K562 (cell line): ENCODE measurements at regions of chr7 and their contacts with region 1.

Region 1: GRCh38 chr7:157432957-157433576 is 96.3 kb downstream of the DNAJB6 start:
- DNase-seq: peak; percentile 57 to 69 (median 66)
- ATAC-seq: peak; percentile 69
- H3K4me3 ChIP-seq: no peak overlapping the region
- H3K27ac ChIP-seq: no peak overlapping the region
- H3K4me1 ChIP-seq: peaks cover 11 to 26% of the 10 kb centered on the region in 2 experiments
- H3K27me3 ChIP-seq: peaks cover 20 to 68% of the 10 kb centered on the region in 2 experiments
- CTCF ChIP-seq: peak; percentile 75 to 82 (median 80)
- EP300 ChIP-seq: no peak
- POLR2A ChIP-seq: no peak
- RAD21 ChIP-seq: peak; percentile 40 to 72; a peak in 3 of 4 replicates

Region 2: DNA sequence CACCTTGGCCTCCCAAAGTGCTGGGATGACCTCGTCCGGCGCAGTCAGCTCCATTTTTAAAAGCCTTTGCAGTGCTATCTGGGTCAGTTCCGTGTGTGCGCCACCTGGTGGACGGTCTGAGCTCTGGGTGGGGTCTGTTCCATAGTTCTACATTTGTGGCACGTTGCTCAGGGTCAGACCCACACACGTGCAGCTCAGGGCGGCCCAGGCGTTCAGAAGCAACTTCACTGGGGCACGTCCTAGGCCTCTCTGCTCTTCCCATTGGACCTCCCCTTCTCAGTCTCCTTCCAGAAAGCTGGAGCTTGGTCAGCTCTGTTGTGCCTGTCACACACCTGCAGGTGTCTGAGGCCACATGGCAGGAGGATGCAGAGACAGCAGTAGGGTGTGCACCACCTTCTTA is 41.6 kb after region 1 on chr7:
- CTCF ChIA-PET with region 1: no interaction called
- POLR2A ChIA-PET with region 1: interaction called, 3 read pairs
- in situ Hi-C with region 1: no loop called
- intact Hi-C with region 1: loop called (anchors 5 kb)
- DNase-seq: peak; percentile 79 to 85 (median 82)
- ATAC-seq: peak; percentile 95
- H3K4me3 ChIP-seq: no peak overlapping the region
- H3K27ac ChIP-seq: no peak overlapping the region
- H3K4me1 ChIP-seq: peaks cover 0 to 17% of the 10 kb centered on the region in 2 experiments; a peak in 2 of 5 replicates
- H3K27me3 ChIP-seq: peaks cover 25 to 46% of the 10 kb centered on the region in 2 experiments
- CTCF ChIP-seq: peak; percentile 69 to 84 (median 79)
- EP300 ChIP-seq: no peak
- POLR2A ChIP-seq: no peak
- RAD21 ChIP-seq: peak; percentile 17 to 62; a peak in 2 of 4 replicates

Region 3: GRCh38 chr7:157568770-157569584 is 135.9 kb after region 1 on chr7:
- CTCF ChIA-PET with region 1: no interaction called
- POLR2A ChIA-PET with region 1: no interaction called
- in situ Hi-C with region 1: no loop called
- intact Hi-C with region 1: no loop called
- DNase-seq: no peak
- ATAC-seq: peak; percentile 39
- H3K4me3 ChIP-seq: no peak overlapping the region
- H3K27ac ChIP-seq: no peak overlapping the region
- H3K4me1 ChIP-seq: no peaks in the 10 kb centered on the region
- H3K27me3 ChIP-seq: peaks cover 63 to 84% of the 10 kb centered on the region in 2 experiments
- CTCF ChIP-seq: no peak
- EP300 ChIP-seq: no peak
- POLR2A ChIP-seq: no peak
- RAD21 ChIP-seq: no peak

Region 4: GRCh38 chr7:157875230-157876179 is 442.4 kb after region 1 on chr7:
- CTCF ChIA-PET with region 1: no interaction called
- POLR2A ChIA-PET with region 1: no interaction called
- in situ Hi-C with region 1: no loop called
- intact Hi-C with region 1: loop called (anchors 2 kb)
- DNase-seq: peak; percentile 50 to 69 (median 67)
- ATAC-seq: peak; percentile 93
- H3K4me3 ChIP-seq: no peak overlapping the region
- H3K27ac ChIP-seq: no peak overlapping the region
- H3K4me1 ChIP-seq: peaks cover 0 to 8% of the 10 kb centered on the region in 2 experiments; a peak in 2 of 5 replicates
- H3K27me3 ChIP-seq: peaks cover 3 to 52% of the 10 kb centered on the region in 2 experiments; a peak in 3 of 5 replicates
- CTCF ChIP-seq: peak; percentile 66 to 79 (median 72)
- EP300 ChIP-seq: no peak
- POLR2A ChIP-seq: no peak
- RAD21 ChIP-seq: peak; percentile 10 to 58; a peak in 2 of 4 replicates

Region 5: GRCh38 chr7:158353606-158354570 is 920.8 kb after region 1 on chr7:
- CTCF ChIA-PET with region 1: no interaction called
- POLR2A ChIA-PET with region 1: no interaction called
- in situ Hi-C with region 1: no loop called
- intact Hi-C with region 1: loop called (anchors 10 kb)
- DNase-seq: peak; percentile 62 to 72 (median 68)
- ATAC-seq: peak; percentile 88
- H3K4me3 ChIP-seq: no peak overlapping the region
- H3K27ac ChIP-seq: no peak overlapping the region
- H3K4me1 ChIP-seq: no peaks in the 10 kb centered on the region
- H3K27me3 ChIP-seq: peaks cover 13 to 60% of the 10 kb centered on the region in 2 experiments; a peak in 4 of 5 replicates
- CTCF ChIP-seq: peak; percentile 80 to 92 (median 89)
- EP300 ChIP-seq: no peak
- POLR2A ChIP-seq: no peak
- RAD21 ChIP-seq: peak; percentile 65 to 82